ENCODE measurements at regions of chr14 and their contacts with region 1.

Region 1: DNA sequence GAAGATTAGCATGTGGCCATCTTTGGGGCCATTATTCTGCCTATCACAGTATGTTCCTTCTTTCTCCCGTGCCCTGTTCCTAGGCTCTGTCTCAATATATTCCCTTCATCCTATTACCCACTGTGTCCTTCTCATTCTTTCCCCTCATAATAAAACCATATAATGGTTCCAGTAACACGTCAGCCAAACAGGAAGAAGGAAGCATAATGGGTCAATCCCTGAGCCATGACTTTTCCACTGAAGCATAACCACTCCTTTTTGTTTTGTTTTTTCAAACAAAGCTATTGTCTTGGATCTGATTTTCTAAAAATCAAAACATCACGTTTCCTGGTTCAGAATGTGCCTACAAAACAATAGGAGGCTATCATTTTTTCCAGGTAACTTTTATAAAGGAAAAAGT is 21.3 kb upstream of the RHOJ start:
- DNase-seq: no peak

Region 2: GRCh38 chr14:63203618-63204406 is 20.8 kb after region 1 on chr14:
- intact Hi-C with region 1: loop called (anchors 1 kb)
- DNase-seq: peak; percentile 86

Region 3: GRCh38 chr14:63224196-63224595 is 41.2 kb after region 1 on chr14:
- intact Hi-C with region 1: no loop called
- DNase-seq: no peak